MCF 10A (cell line): ENCODE measurements at regions of chr4 and their contacts with region 1.

Region 1: GRCh38 chr4:110516106-110516922 is 40.4 kb downstream of the ENPEP start:
- DNase-seq: peak; percentile 88
- H3K4me3 Mint-ChIP-seq: peak overlapping the region; percentile 80
- H3K27ac Mint-ChIP-seq: peak overlapping the region; percentile 75
- H3K4me1 Mint-ChIP-seq: no peaks in the 10 kb centered on the region
- H3K27me3 Mint-ChIP-seq: no peaks in the 10 kb centered on the region
- CTCF ChIP-seq: peak; percentile 56

Region 2: DNA sequence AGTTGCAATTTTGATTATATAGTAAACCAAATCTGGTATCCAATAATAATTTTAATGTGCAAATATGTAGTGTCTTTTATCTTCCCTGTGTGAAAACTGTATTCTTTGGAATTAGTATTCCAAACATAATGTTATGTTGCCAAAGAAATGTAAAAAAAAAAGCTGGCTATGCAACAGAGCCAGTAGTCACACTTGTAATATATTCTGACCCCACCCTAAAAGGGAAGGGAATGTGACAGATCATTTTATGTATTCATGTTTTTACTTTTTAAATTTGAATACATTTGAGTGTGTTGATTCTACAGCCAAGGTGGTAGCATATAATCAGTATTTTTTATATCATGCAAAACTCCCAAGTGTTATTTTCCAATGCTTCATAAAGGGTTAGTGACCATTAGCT is 984.1 kb before region 1 on chr4:
- CTCF ChIA-PET with region 1: no interaction called
- POLR2A ChIA-PET with region 1: no interaction called
- intact Hi-C with region 1: no loop called
- DNase-seq: no peak
- H3K4me3 Mint-ChIP-seq: no peak overlapping the region
- H3K27ac Mint-ChIP-seq: no peak overlapping the region
- H3K4me1 Mint-ChIP-seq: no peaks in the 10 kb centered on the region
- H3K27me3 Mint-ChIP-seq: no peaks in the 10 kb centered on the region
- CTCF ChIP-seq: no peak

Region 3: DNA sequence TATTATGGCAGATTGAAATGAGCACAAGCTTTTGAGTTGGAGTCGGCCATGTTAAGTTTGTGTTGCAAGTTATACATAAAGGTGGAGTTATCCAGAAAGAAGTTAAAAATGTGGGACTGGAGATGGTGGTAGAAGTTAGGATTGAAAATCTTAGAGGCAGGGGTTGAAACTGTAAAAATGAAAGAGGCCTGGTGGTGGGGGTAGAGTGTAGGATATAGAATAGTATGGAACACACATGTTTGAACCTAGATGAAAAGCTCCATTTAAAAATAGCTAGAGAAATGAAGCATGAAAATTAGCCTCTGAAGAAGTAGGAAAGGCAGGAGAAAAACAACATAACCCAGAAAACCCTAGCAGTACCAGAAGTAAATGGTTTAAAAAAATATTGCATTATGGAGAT is 172.2 kb before region 1 on chr4:
- CTCF ChIA-PET with region 1: interaction called, 43 read pairs
- POLR2A ChIA-PET with region 1: no interaction called
- intact Hi-C with region 1: no loop called
- DNase-seq: peak; percentile 22
- H3K4me3 Mint-ChIP-seq: no peak overlapping the region
- H3K27ac Mint-ChIP-seq: no peak overlapping the region
- H3K4me1 Mint-ChIP-seq: no peaks in the 10 kb centered on the region
- H3K27me3 Mint-ChIP-seq: peaks cover 5% of the 10 kb centered on the region
- CTCF ChIP-seq: peak; percentile 18

Region 4: DNA sequence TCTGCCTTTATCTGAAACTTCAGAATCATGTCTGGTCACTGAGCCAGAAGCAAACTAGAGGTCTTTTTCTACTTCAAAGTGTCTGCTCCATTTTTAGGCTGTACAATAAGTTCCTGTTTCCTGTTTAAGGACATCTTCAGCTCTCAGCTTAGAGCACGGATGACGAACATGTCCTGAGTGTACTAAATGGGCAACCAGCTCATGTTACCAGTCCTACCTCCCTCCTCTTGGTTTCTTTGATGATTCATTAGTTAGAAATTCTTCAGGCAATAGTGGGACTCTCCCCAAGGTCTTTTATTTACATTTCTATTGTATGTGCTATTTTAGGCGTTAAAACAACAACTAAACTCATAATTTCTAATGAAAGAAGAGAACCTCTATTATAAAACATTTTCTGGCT is 17.6 kb after region 1 on chr4:
- CTCF ChIA-PET with region 1: interaction called, 78 read pairs
- POLR2A ChIA-PET with region 1: interaction called, 4 read pairs
- intact Hi-C with region 1: no loop called
- DNase-seq: peak; percentile 97
- H3K4me3 Mint-ChIP-seq: peak overlapping the region; percentile 20
- H3K27ac Mint-ChIP-seq: peak overlapping the region; percentile 96
- H3K4me1 Mint-ChIP-seq: peaks cover 6% of the 10 kb centered on the region
- H3K27me3 Mint-ChIP-seq: no peaks in the 10 kb centered on the region
- CTCF ChIP-seq: no peak

Region 5: DNA sequence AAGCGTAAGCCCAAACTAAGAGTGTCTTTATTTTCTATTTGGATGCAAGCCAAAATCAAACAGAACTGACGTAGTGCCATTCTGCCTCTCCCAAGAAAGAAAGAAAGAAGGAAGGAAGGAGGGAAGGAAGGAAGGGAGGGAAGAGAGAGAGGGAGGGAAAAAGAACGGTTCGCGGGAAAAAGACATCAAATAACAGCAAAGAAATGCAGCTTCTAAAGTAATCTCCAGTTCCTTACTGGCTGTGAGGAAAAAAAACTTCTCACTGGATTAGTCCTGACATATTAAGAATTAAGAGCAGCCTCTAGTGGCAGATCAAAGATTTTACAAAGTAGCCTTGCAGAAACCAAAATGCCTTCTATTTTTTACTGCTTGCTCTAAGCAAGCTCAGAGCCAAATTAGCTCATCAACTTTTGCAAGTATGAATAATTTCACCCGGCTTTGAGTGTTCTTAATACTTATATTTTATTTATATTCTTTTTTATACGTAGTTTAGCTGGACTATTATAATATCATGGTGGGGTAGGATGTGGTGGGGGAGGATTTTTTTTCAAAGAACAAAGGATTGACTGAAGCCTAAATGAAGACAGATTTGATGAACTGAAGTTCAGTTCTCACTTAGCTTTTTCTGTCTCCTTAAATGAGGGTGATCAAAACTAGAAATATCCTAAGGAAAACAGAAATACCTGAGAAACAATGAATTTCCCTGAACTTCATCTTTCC is 70.0 kb after region 1 on chr4:
- CTCF ChIA-PET with region 1: interaction called, 39 read pairs
- POLR2A ChIA-PET with region 1: interaction called, 3 read pairs
- intact Hi-C with region 1: loop called (anchors 1 kb)
- DNase-seq: peak; percentile 68
- H3K4me3 Mint-ChIP-seq: peak overlapping the region; percentile 63
- H3K27ac Mint-ChIP-seq: peak overlapping the region; percentile 13
- H3K4me1 Mint-ChIP-seq: no peaks in the 10 kb centered on the region
- H3K27me3 Mint-ChIP-seq: no peaks in the 10 kb centered on the region
- CTCF ChIP-seq: peak; percentile 60